Right cardiac atrium (tissue), 5 donors: ENCODE measurements at regions of chr1 and their contacts with region 1.

Region 1: GRCh38 chr1:236489710-236490377 is 33.9 kb upstream of the LGALS8 start:
- DNase-seq: peak in 1 of 3 donors; percentile 43
- ATAC-seq: peak; percentile 56 to 71
- H3K4me3 ChIP-seq: no peak overlapping the region
- H3K27ac ChIP-seq: no peak overlapping the region
- H3K4me1 ChIP-seq: no peaks in the 10 kb centered on the region
- H3K27me3 ChIP-seq: no peaks in the 10 kb centered on the region

Region 2: DNA sequence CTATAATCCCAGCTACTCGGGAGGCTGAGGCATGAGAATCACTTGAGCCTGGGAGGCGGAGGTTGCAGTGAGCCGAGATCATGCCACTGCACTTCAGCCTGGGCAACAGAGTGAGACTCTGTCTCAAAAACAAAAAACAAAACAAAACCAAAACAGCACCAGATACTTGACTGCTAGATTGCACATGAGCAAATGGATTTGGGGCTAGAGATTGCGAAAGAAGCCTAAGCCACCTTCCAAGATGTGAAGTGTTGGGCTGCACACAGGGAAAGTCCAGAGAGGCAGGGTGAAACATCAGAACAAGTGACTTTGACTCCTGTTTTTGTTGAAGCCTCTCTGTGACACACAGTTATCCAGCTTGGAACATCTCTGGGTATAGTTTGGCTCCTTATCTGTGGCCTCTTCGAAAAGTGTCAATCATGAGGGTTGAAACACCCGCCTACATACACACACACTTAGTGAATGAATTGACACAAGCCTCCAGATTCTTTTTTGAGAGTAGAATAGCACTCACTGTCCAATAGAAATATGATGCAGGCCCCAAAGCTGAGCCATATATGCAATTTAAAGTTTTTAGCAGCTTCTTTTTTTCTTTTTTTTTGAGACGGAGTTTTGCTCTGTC is 381.7 kb before region 1 on chr1:
- intact Hi-C with region 1: loop called (anchors 2 to 5 kb)
- DNase-seq: no peak
- ATAC-seq: no peak
- H3K4me3 ChIP-seq: no peak overlapping the region
- H3K27ac ChIP-seq: no peak overlapping the region
- H3K4me1 ChIP-seq: no peaks in the 10 kb centered on the region
- H3K27me3 ChIP-seq: no peaks in the 10 kb centered on the region

Region 3: GRCh38 chr1:236113324-236114032 is 376.4 kb before region 1 on chr1:
- intact Hi-C with region 1: loop called (anchors 2 to 5 kb)
- DNase-seq: no peak
- ATAC-seq: peak; percentile 58 to 61
- H3K4me3 ChIP-seq: no peak overlapping the region
- H3K27ac ChIP-seq: peak overlapping the region; percentile 73
- H3K4me1 ChIP-seq: no peaks in the 10 kb centered on the region
- H3K27me3 ChIP-seq: no peaks in the 10 kb centered on the region

Region 4: GRCh38 chr1:236543065-236543669 is 53.3 kb after region 1 on chr1:
- intact Hi-C with region 1: no loop called
- DNase-seq: peak in 1 of 3 donors; percentile 48
- ATAC-seq: peak in 1 of 2 donors; percentile 36
- H3K4me3 ChIP-seq: no peak overlapping the region
- H3K27ac ChIP-seq: no peak overlapping the region
- H3K4me1 ChIP-seq: no peaks in the 10 kb centered on the region
- H3K27me3 ChIP-seq: no peaks in the 10 kb centered on the region